Activated T-helper 1 cell treated with anti-CD3 and anti-CD28 coated beads, Interleukin-12 subunit alpha, Interleukin-12 subunit beta, Interleukin-2, Interleukin-4 antibody, amounts not matched to agents 30 ng/mL and 10 ng/mL and 1 ng/mL, durations not matched to agents 14 hours and 24 hours and 36 hours (primary cell): ENCODE measurements at regions of chr5 and their contacts with region 1.

Region 1: GRCh38 chr5:76175051-76175666 is 92.0 kb downstream of the SV2C start:
- DNase-seq: peak; percentile 27
- H3K4me3 Mint-ChIP-seq: no peak overlapping the region
- H3K27ac Mint-ChIP-seq: no peak overlapping the region
- H3K4me1 Mint-ChIP-seq: peaks cover 22% of the 10 kb centered on the region
- H3K27me3 Mint-ChIP-seq: peaks cover 6% of the 10 kb centered on the region

Region 2: GRCh38 chr5:76074487-76075065 is 100.6 kb before region 1 on chr5:
- intact Hi-C with region 1: loop called (anchors 2 kb)
- DNase-seq: no peak
- H3K4me3 Mint-ChIP-seq: no peak overlapping the region
- H3K27ac Mint-ChIP-seq: no peak overlapping the region
- H3K4me1 Mint-ChIP-seq: no peaks in the 10 kb centered on the region
- H3K27me3 Mint-ChIP-seq: peaks cover 47% of the 10 kb centered on the region